Heart right ventricle (tissue), 16 donors: ENCODE measurements at regions of chr9 and their contacts with region 1.

Region 1: DNA sequence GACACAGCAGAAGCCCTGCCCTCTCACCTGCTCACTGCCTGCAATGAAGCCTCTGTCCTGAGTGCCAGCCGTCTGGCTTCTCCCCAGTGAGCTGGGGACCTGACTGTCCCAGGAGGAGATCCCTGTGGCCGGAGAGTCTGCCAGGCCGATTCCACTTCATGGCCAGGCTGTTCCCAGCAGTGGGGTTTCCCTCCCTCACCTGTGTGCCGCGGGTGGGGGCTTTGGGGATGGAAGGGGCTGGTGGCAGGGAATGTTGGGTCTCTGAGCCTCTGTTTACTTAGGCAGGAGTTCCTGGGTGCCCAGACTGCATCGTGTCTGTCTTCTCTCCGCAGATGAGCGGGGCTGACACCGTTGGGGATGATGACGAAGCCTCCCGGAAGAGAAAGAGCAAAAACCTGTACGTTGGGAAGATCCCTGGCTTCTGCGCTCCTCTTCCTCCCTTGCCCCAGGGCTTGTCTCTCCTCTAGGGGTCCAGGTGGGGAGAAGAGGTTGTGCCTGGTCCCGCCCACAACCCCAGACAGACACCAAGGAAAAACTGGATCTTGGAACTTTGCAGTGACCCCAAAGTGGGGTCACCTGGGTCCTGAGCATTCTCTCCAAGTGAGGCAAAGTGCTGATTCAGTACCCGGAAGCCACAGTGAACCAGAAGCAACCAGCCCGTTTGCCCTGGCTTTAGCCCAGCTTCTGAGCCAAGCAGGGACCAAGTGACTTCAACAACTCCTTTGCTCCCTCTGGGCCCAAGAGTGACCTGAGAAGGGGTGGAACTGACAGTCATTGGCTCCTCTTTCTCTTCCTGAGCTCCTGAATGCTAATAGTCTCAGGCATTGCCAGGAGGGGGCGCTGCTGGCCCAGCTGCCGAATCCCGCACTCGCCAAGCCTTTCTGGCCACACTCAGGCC is 127.7 kb downstream of the RGS3 start:
- DNase-seq: peak; percentile 85
- ATAC-seq: peak in 7 of 8 donors; percentile 14 to 31 (median 25)
- H3K4me3 ChIP-seq: no peak overlapping the region
- H3K27ac ChIP-seq: peak overlapping the region in 9 of 10 donors; percentile 57 to 98 (median 81)
- H3K4me1 ChIP-seq: peaks cover 37 to 94% (median 87%) of the 10 kb centered on the region in 9 donors
- H3K27me3 ChIP-seq: no peaks in the 10 kb centered on the region
- CTCF ChIP-seq: peak; percentile 92 to 98 (median 96)

Region 2: DNA sequence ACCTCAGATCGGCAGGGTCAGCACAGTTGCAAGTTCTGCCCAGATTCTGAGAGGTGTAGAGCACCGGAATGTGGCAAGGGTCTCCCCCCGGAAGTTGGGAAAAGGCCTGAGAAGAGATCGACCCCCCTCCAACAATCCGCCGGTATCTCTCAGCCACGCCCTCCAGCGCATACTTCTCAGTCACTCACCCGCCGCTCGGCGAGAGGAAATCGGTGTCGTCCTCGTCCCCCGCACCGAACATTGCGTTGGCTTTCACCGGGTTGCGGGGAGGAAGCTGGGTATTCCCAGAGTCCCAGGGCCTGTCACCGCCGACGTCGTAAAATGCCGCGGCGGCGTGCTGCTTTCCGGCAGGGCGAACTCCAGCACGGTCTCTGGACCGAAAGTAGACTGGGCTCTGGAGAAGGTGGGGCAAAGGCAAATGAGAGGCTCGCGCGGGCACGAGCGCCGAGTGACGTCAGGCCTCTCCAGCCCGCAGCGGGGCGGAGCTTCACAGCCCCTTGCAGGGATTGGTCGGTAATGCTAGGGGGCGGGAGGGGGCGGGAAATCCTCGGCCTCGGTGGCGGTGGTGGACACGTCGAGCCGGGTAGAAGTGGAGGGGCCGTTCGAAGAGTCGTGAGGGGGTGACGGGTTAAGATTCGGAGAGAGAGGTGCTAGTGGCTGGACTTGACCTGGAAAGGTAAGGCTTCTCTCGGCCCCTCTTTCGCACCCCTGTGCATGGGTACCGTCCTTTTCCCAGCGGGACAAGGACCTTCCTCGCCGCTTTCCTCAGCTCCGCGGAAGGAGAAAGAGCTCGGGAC is 370.0 kb before region 1 on chr9 and contains the starts of genes FKBP15 and SLC31A1:
- intact Hi-C with region 1: loop called in 1 of 10 experiments (anchors 5 kb)
- DNase-seq: peak; percentile 98
- ATAC-seq: peak; percentile 99 to 100 (median 100)
- H3K4me3 ChIP-seq: peak within 1 kb of the TSS; percentile 62 to 93 (median 86)
- H3K27ac ChIP-seq: peak within 1 kb of the TSS; percentile 47 to 96 (median 88)
- H3K4me1 ChIP-seq: peaks cover 11 to 83% (median 53%) of the 10 kb centered on the region in 9 donors
- H3K27me3 ChIP-seq: no peaks in the 10 kb centered on the region
- CTCF ChIP-seq: peak in 1 of 9 donors; percentile 14
- total RNA-seq, gene FKBP15: 16.3 to 27.9 (median 20.1) TPM
- total RNA-seq, gene SLC31A1: 9.3 to 18.4 (median 10.9) TPM

Region 3: DNA sequence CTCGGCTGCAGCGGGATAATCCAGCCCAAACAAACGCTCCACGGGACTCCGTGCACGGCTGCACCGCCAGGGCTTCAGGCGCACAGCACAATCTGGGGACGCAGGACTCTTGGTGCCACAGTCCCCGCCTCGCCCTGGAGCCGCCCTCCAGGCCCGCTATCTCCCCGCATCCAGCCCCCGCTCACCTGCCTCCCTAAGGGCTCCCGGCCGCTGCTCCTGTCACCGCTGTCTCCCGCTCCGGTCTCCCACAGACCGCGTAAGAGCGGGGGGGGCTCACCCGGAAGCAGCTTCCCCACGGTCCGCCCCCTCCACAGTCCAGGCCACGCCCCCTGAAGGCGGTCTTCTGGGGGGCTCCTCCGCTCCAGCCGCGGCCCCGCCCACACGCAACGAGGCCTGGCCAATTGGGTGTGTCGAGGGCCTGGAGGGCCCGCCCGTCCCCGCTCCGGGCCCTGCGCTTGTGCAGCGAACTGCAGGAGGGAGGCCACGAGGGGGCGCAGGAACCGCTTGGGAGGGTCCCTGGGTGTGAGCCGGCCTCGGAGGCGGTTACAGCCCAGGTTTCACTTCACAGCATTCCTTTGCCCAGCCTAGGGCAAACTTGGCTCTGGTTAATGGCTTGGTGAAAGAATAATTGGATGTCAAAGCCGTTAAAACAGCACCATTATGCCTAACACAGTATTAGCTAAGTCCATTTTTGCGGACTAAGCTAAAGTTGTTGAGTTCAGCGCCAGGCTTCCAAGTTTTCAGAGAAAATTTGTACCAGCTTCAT is 190.0 kb before region 1 on chr9 and contains the start of gene ALAD:
- intact Hi-C with region 1: loop called in 2 of 10 experiments (anchors 1 to 5 kb)
- DNase-seq: peak; percentile 99 to 100
- ATAC-seq: peak; percentile 98 to 100 (median 99)
- H3K4me3 ChIP-seq: peak within 1 kb of the TSS; percentile 64 to 93 (median 84)
- H3K27ac ChIP-seq: peak within 1 kb of the TSS; percentile 27 to 89 (median 82)
- H3K4me1 ChIP-seq: peaks cover 7 to 62% (median 36%) of the 10 kb centered on the region in 9 donors
- H3K27me3 ChIP-seq: no peaks in the 10 kb centered on the region
- CTCF ChIP-seq: peak in 8 of 9 donors; percentile 90 to 100 (median 98)
- total RNA-seq, gene ALAD: 60.9 to 239 (median 103) TPM

Region 4: GRCh38 chr9:113501129-113501686 is 90.0 kb before region 1 on chr9:
- intact Hi-C with region 1: loop called in 5 of 10 experiments (anchors 5 kb)
- DNase-seq: peak; percentile 56 to 61
- ATAC-seq: peak; percentile 61 to 81 (median 74)
- H3K4me3 ChIP-seq: peak overlapping the region; percentile 23 to 66 (median 53)
- H3K27ac ChIP-seq: peak overlapping the region; percentile 60 to 96 (median 85)
- H3K4me1 ChIP-seq: peaks cover 15 to 60% (median 44%) of the 10 kb centered on the region in 9 donors
- H3K27me3 ChIP-seq: no peaks in the 10 kb centered on the region
- CTCF ChIP-seq: peak in 5 of 9 donors; percentile 7 to 35 (median 25)

Region 5: GRCh38 chr9:113620377-113621161 is 29.3 kb after region 1 on chr9:
- intact Hi-C with region 1: loop called in 1 of 10 experiments (anchors 2 kb)
- DNase-seq: peak; percentile 53 to 86
- ATAC-seq: peak; percentile 55 to 85 (median 74)
- H3K4me3 ChIP-seq: peak overlapping the region in 4 of 10 donors; percentile 5 to 31 (median 20)
- H3K27ac ChIP-seq: peak overlapping the region; percentile 83 to 98 (median 90)
- H3K4me1 ChIP-seq: peaks cover 21 to 86% (median 71%) of the 10 kb centered on the region in 9 donors
- H3K27me3 ChIP-seq: no peaks in the 10 kb centered on the region
- CTCF ChIP-seq: no peak